ENCODE measurements at regions of chr2 and their contacts with region 1.

Region 1: GRCh38 chr2:221473451-221473850 is 98.7 kb downstream of the EPHA4 start:
- DNase-seq: no peak
- ATAC-seq: no peak
- H3K4me3 ChIP-seq: no peak overlapping the region
- H3K4me3 Mint-ChIP-seq: no peak overlapping the region
- H3K27ac ChIP-seq: no peak overlapping the region
- H3K27ac Mint-ChIP-seq: no peak overlapping the region
- H3K4me1 ChIP-seq: no peaks in the 10 kb centered on the region
- H3K4me1 Mint-ChIP-seq: no peaks in the 10 kb centered on the region
- H3K27me3 ChIP-seq: no peaks in the 10 kb centered on the region
- H3K27me3 Mint-ChIP-seq: no peaks in the 10 kb centered on the region
- CTCF ChIP-seq: no peak

Region 2: GRCh38 chr2:221429741-221430491 is 43.5 kb before region 1 on chr2:
- CTCF ChIA-PET with region 1: no interaction called
- POLR2A ChIA-PET with region 1: no interaction called
- intact Hi-C with region 1: loop called in 1 of 2 experiments (anchors 5 kb)
- DNase-seq: no peak
- ATAC-seq: no peak
- H3K4me3 ChIP-seq: no peak overlapping the region
- H3K4me3 Mint-ChIP-seq: no peak overlapping the region
- H3K27ac ChIP-seq: no peak overlapping the region
- H3K27ac Mint-ChIP-seq: no peak overlapping the region
- H3K4me1 ChIP-seq: no peaks in the 10 kb centered on the region
- H3K4me1 Mint-ChIP-seq: no peaks in the 10 kb centered on the region
- H3K27me3 ChIP-seq: no peaks in the 10 kb centered on the region
- H3K27me3 Mint-ChIP-seq: no peaks in the 10 kb centered on the region
- CTCF ChIP-seq: no peak

Measured in CD8-positive, alpha-beta T cell (primary cell).